ENCODE measurements at regions of chr12 and their contacts with region 1.

Region 1: GRCh38 chr12:31650927-31651326 is 8.6 kb upstream of the ETFBKMT start:
- DNase-seq: no peak
- ATAC-seq: no peak
- H3K4me3 ChIP-seq: no peak overlapping the region
- H3K4me3 Mint-ChIP-seq: no peak overlapping the region
- H3K27ac ChIP-seq: no peak overlapping the region
- H3K27ac Mint-ChIP-seq: no peak overlapping the region
- H3K4me1 ChIP-seq: peaks cover 10% of the 10 kb centered on the region
- H3K4me1 Mint-ChIP-seq: peaks cover 7% of the 10 kb centered on the region
- H3K27me3 ChIP-seq: no peaks in the 10 kb centered on the region
- H3K27me3 Mint-ChIP-seq: no peaks in the 10 kb centered on the region
- CTCF ChIP-seq: no peak

Region 2: DNA sequence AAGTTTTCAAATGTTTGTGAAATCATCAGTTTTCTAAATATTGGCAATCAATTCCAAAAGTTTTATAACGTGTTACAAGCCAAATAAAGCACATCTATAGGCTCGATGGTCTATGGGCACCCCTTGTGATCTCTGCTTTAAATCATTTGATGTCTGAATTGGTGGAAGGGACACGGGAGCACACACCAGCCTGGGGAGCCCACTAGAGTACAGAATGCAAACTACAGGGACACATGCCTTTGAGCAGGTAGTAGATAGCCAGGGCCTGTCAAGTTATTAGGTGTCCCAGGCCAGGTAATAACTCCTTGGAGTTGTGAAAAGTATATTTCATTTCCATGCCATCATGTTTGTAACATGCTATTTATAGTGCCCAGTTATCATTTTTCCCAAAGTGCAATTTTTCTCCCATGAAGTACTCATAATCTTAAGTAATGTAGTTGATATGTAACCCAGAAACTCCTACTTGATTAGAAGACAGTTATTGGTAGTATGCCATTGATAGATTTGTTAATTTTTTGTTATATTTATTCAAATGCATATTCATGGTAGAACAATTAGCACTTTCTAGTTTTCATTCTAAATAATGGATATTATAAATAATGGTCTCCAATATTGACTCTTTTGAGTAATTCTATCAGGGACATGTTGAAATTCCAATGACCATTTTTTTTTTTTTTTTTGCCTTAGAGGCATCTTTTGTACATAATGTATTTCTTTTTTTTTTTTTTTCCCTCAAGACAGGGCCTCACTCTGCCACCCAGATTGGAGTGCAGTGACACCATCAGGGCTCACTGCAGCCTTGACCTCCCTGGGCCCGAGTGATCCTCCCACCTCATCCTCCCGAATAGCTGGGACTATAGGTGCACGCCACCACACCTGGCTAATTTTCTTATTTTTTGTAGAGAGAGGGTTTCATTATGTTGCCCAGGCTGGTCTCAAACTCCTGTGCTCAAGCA is 651.6 kb after region 1 on chr12:
- CTCF ChIA-PET with region 1: interaction called, 4 read pairs
- POLR2A ChIA-PET with region 1: interaction called, 5 read pairs
- intact Hi-C with region 1: loop called (anchors 2 kb)
- DNase-seq: peak in 5 of 14 experiments; percentile 3 to 51 (median 11)
- ATAC-seq: no peak
- H3K4me3 ChIP-seq: no peak overlapping the region
- H3K4me3 Mint-ChIP-seq: no peak overlapping the region
- H3K27ac ChIP-seq: no peak overlapping the region
- H3K27ac Mint-ChIP-seq: no peak overlapping the region
- H3K4me1 ChIP-seq: no peaks in the 10 kb centered on the region
- H3K4me1 Mint-ChIP-seq: peaks cover 10% of the 10 kb centered on the region
- H3K27me3 ChIP-seq: no peaks in the 10 kb centered on the region
- H3K27me3 Mint-ChIP-seq: no peaks in the 10 kb centered on the region
- CTCF ChIP-seq: peak; percentile 31

Region 3: GRCh38 chr12:32312049-32312670 is 661.2 kb after region 1 on chr12:
- CTCF ChIA-PET with region 1: interaction called, 12 read pairs
- POLR2A ChIA-PET with region 1: interaction called, 21 read pairs
- intact Hi-C with region 1: loop called in 1 of 2 experiments (anchors 1 kb)
- DNase-seq: peak in 4 of 14 experiments; percentile 4 to 69 (median 64)
- ATAC-seq: peak; percentile 55
- H3K4me3 ChIP-seq: no peak overlapping the region
- H3K4me3 Mint-ChIP-seq: no peak overlapping the region
- H3K27ac ChIP-seq: no peak overlapping the region
- H3K27ac Mint-ChIP-seq: no peak overlapping the region
- H3K4me1 ChIP-seq: no peaks in the 10 kb centered on the region
- H3K4me1 Mint-ChIP-seq: peaks cover 6% of the 10 kb centered on the region
- H3K27me3 ChIP-seq: no peaks in the 10 kb centered on the region
- H3K27me3 Mint-ChIP-seq: no peaks in the 10 kb centered on the region
- CTCF ChIP-seq: peak; percentile 78